T-cell (primary cell): ENCODE measurements at regions of chr5 and their contacts with region 1.

Region 1: GRCh38 chr5:10400411-10400810 is 41.3 kb upstream of the ROPN1L start:
- DNase-seq: no peak
- ATAC-seq: no peak
- H3K4me3 ChIP-seq: no peak overlapping the region
- H3K4me3 Mint-ChIP-seq: no peak overlapping the region
- H3K27ac ChIP-seq: no peak overlapping the region
- H3K27ac Mint-ChIP-seq: no peak overlapping the region
- H3K4me1 ChIP-seq: no peaks in the 10 kb centered on the region
- H3K4me1 Mint-ChIP-seq: peaks cover 0 to 4% (median 0%) of the 10 kb centered on the region in 3 donors
- H3K27me3 ChIP-seq: no peaks in the 10 kb centered on the region
- H3K27me3 Mint-ChIP-seq: no peaks in the 10 kb centered on the region

Region 2: DNA sequence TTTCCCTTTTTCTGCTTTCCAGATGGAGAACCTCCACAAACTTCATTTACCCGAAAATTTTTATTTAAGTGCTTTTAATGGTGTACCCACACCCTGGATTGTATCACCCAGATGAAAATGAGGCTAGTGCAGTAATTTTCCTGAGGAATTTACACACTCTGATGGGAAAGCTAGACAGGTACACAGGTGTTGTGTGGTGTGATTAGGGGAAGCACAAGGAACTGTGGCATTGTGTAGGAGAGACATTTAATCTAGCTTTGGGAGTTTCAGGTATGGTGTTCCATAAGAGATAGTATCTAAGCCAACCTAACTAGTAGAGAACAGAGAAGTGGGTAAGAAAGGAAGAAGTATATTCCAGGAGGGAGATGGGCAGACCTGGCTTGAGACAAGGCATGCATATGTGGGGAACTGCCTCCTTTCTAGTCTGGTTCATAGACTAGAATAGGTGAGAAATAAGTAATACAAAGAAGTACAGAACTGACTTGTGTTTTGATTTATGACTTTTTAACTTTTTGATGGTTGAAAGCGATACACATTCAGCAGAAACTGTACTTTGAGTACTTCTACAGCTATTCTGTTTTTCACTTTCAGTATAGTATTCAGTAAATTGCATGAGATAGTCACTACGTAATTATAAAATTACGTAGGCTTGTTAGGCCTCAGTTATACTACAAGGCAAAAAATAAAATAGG is 18.4 kb after region 1 on chr5:
- CTCF ChIA-PET with region 1: interaction called in 1 of 2 experiments, 3 read pairs
- POLR2A ChIA-PET with region 1: interaction called in 1 of 2 experiments, 11 read pairs
- DNase-seq: no peak
- ATAC-seq: no peak
- H3K4me3 ChIP-seq: no peak overlapping the region
- H3K4me3 Mint-ChIP-seq: no peak overlapping the region
- H3K27ac ChIP-seq: no peak overlapping the region
- H3K27ac Mint-ChIP-seq: peak overlapping the region in 1 of 2 donors; percentile 11
- H3K4me1 ChIP-seq: peaks cover 9 to 14% of the 10 kb centered on the region in 2 experiments
- H3K4me1 Mint-ChIP-seq: peaks cover 31 to 42% (median 32%) of the 10 kb centered on the region in 3 donors
- H3K27me3 ChIP-seq: no peaks in the 10 kb centered on the region
- H3K27me3 Mint-ChIP-seq: no peaks in the 10 kb centered on the region